ENCODE measurements at regions of chr22 and their contacts with region 1.

Region 1: DNA sequence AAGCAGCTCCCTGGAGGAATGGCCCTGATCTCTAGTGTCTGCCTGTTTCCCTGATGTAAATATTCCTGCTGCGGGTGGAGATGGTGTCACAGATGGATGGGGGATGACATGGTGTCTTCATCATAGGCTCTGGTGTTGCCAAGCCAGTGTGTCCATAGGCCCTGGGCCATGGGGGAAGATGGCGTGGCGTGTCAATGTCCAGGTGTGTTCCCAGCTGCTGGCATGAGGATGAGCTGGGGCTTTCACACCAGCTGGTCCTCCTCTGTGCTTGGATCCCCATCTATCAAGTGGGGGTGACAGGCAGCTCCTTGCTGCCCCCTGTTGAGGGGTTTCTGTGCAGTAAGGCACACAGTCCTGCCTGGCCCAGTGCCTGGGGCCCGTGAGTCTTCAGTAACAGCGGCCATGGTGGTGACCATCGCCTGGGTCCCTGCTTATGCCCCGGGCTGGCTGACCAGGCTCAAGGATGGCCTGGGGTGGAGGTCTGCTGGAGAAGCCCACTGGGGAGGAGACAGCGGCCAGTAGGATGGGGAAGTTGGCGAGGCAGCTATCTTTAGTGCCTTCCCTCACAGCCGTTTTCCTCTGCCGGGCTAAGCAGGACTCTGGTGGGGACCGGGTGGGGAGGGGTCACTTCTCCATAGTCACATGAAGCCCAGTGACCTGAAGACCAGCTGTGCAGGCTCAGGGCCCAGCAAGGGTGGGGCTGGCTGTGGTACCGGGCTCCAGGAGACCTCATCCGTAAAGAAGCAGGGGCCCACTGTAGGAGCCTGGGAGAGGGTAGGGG is 12.7 kb downstream of the RPL3 start:
- DNase-seq: peak; percentile 78
- ATAC-seq: peak; percentile 1; the same call in 1 of the 2 replicates
- H3K4me3 Mint-ChIP-seq: no peak overlapping the region
- H3K27ac Mint-ChIP-seq: peak overlapping the region; percentile 55
- H3K4me1 Mint-ChIP-seq: peaks cover 25% of the 10 kb centered on the region
- H3K27me3 Mint-ChIP-seq: no peaks in the 10 kb centered on the region
- CTCF ChIP-seq: no peak

Region 2: GRCh38 chr22:38681784-38682335 is 624.9 kb before region 1 on chr22 and contains the start of gene TOMM22:
- CTCF ChIA-PET with region 1: no interaction called
- POLR2A ChIA-PET with region 1: no interaction called
- DNase-seq: peak; percentile 90
- ATAC-seq: peak; percentile 99
- H3K4me3 Mint-ChIP-seq: peak within 1 kb of the TSS; percentile 99
- H3K27ac Mint-ChIP-seq: peak within 1 kb of the TSS; percentile 99
- H3K4me1 Mint-ChIP-seq: peaks cover 12% of the 10 kb centered on the region
- H3K27me3 Mint-ChIP-seq: no peaks in the 10 kb centered on the region; the same call in 1 of the 2 replicates
- CTCF ChIP-seq: no peak
- total RNA-seq, gene TOMM22: 131 to 146 TPM (median 135 TPM) in 3 replicates

Region 3: DNA sequence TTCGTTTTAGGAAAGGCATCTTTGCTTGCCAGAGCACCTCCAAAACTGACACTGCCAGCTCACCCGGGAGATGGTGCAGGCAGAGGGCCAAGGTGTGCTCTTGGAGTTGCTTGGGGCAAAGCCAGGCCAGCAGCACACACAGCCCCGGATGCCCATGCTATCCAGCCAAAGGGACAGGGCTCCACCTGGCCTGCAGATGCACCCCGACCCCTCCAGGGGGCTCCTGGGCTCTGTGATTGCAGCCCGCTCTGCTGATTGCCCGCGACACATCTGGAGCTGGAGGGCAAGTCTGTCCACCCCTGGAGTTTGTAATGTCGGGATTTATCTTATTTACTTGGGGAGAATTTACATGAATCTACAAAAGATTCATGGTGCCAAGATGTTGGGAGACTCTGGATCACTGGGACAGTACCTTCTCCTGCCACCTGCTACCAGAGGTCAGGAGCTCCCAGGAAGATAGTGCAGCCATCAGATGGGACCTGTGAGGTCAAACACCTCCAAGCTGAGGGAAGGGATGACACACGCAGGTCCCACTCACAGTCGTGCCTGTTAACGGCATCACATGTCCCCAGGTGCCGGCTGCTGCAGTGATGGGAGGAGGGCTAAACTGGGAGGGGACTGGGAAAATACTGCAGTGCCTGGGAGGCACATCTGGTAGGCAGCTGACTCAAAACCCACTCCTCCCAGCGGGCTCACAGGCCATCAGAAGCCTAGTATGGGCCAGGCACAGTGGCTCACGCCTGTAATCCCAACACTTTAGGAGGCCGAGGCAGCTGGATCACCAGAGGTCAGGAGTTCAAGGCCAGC is 171.5 kb before region 1 on chr22:
- CTCF ChIA-PET with region 1: interaction called, 49 read pairs
- POLR2A ChIA-PET with region 1: interaction called, 4 read pairs
- DNase-seq: peak; percentile 90
- ATAC-seq: peak; percentile 94
- H3K4me3 Mint-ChIP-seq: no peak overlapping the region
- H3K27ac Mint-ChIP-seq: peak overlapping the region; percentile 79
- H3K4me1 Mint-ChIP-seq: peaks cover 28% of the 10 kb centered on the region
- H3K27me3 Mint-ChIP-seq: no peaks in the 10 kb centered on the region; the same call in 1 of the 2 replicates
- CTCF ChIP-seq: peak; percentile 67

Region 4: GRCh38 chr22:39178206-39179111 is 128.3 kb before region 1 on chr22:
- CTCF ChIA-PET with region 1: interaction called, 66 read pairs
- POLR2A ChIA-PET with region 1: interaction called, 14 read pairs
- DNase-seq: no peak
- ATAC-seq: no peak
- H3K4me3 Mint-ChIP-seq: no peak overlapping the region
- H3K27ac Mint-ChIP-seq: peak overlapping the region; percentile 92
- H3K4me1 Mint-ChIP-seq: peaks cover 73% of the 10 kb centered on the region
- H3K27me3 Mint-ChIP-seq: no peaks in the 10 kb centered on the region; the same call in none of the 2 replicates
- CTCF ChIP-seq: no peak

Region 5: DNA sequence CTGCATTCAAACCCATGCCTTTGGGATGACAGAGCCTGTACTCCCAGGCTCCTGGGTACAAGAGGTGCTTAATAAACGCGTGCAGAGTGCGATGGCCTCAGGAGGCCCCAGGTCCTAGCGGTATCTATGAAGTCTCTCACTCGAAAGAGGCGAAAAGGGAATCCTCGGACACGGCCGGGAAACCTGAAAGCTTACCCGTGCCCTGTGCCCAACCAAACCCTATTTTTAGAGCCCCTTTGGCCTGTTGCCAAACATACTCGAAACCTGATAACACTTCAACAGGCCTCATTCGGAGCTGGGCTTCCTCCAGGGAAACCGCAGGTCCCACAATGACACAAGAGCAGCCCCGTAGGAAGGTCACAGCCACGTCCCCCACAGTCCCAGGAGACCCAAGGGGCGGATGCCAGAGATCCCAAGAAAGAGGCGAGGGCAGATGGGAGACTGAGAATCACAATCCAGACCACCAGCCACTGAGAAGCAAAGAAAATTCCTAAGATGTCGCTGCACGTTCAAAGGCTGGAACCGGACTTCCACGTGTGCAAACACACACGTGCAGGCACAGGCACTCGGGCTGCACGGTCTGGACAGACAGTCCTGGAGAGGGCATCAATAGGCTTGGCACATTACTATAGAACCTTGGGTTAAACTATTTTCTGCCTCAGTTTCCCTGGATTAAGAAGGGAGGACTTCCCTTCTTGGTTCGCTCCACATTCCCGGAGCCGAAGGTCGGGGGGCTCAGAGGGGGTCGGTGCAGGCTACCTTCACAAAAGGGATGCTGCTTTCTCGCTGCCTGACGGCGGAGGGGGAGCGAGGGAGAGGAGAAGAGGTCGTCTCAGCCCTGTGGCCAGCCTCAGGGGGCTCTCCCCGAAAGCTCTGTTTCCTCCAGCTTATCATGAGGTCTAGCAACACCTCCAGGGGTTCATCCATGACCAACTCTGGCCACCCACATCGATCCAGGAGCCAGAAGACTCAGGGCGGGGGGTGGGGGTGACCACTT is 70.2 kb before region 1 on chr22:
- CTCF ChIA-PET with region 1: interaction called, 30 read pairs
- POLR2A ChIA-PET with region 1: interaction called, 4 read pairs
- DNase-seq: no peak
- ATAC-seq: no peak
- H3K4me3 Mint-ChIP-seq: no peak overlapping the region
- H3K27ac Mint-ChIP-seq: no peak overlapping the region
- H3K4me1 Mint-ChIP-seq: peaks cover 60% of the 10 kb centered on the region
- H3K27me3 Mint-ChIP-seq: peaks cover 59% of the 10 kb centered on the region
- CTCF ChIP-seq: no peak

Region 6: GRCh38 chr22:39292561-39293098 is 14.1 kb before region 1 on chr22:
- CTCF ChIA-PET with region 1: interaction called, 30 read pairs
- POLR2A ChIA-PET with region 1: no interaction called
- DNase-seq: peak; percentile 55
- ATAC-seq: peak; percentile 66
- H3K4me3 Mint-ChIP-seq: no peak overlapping the region
- H3K27ac Mint-ChIP-seq: peak overlapping the region; percentile 19; the same call in 1 of the 2 replicates
- H3K4me1 Mint-ChIP-seq: peaks cover 15% of the 10 kb centered on the region
- H3K27me3 Mint-ChIP-seq: no peaks in the 10 kb centered on the region
- CTCF ChIP-seq: no peak

Region 7: GRCh38 chr22:39343259-39344048 is 36.7 kb after region 1 on chr22:
- CTCF ChIA-PET with region 1: interaction called, 15 read pairs
- POLR2A ChIA-PET with region 1: interaction called, 3 read pairs
- DNase-seq: peak; percentile 77
- ATAC-seq: peak; percentile 95
- H3K4me3 Mint-ChIP-seq: no peak overlapping the region
- H3K27ac Mint-ChIP-seq: no peak overlapping the region
- H3K4me1 Mint-ChIP-seq: peaks cover 18% of the 10 kb centered on the region
- H3K27me3 Mint-ChIP-seq: peaks cover 3% of the 10 kb centered on the region
- CTCF ChIP-seq: 0 out of 2 replicates have a peak, but pooled peaks have one; percentile 11